Right ventricle myocardium inferior (tissue), 1 donor: ENCODE measurements at regions of chr17 and their contacts with region 1.

Region 1: GRCh38 chr17:55845385-55845784 is 94.5 kb downstream of the PCTP start:
- DNase-seq: peak; percentile 74
- ATAC-seq: peak; percentile 89

Region 2: DNA sequence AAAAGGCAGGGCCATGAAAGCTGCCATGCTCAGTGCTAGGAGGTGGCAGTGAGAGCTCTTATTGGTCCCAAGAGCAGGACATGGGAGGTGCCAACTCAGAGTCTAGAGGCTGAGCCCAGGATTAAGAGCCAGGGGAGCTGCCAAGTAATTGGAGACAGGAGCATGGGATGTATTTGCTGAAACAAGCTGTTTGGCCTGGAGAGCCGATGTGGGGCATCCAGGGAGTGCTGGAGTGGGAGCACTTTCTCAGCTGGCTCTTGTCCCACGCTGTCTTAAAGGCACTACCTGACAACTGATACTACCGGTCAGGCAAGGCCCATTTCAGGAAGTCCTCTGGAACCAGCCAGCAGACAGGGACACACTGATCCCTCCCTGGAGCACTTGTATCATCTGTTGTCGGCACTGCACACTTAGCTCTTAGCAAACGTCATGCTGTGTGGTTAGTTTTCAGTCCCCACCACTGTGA is 327.2 kb after region 1 on chr17:
- intact Hi-C with region 1: no loop called
- DNase-seq: no peak
- ATAC-seq: peak; percentile 85

Region 3: GRCh38 chr17:56320443-56320842 is 475.1 kb after region 1 on chr17:
- intact Hi-C with region 1: loop called (anchors 5 kb)
- DNase-seq: no peak
- ATAC-seq: no peak

Region 4: DNA sequence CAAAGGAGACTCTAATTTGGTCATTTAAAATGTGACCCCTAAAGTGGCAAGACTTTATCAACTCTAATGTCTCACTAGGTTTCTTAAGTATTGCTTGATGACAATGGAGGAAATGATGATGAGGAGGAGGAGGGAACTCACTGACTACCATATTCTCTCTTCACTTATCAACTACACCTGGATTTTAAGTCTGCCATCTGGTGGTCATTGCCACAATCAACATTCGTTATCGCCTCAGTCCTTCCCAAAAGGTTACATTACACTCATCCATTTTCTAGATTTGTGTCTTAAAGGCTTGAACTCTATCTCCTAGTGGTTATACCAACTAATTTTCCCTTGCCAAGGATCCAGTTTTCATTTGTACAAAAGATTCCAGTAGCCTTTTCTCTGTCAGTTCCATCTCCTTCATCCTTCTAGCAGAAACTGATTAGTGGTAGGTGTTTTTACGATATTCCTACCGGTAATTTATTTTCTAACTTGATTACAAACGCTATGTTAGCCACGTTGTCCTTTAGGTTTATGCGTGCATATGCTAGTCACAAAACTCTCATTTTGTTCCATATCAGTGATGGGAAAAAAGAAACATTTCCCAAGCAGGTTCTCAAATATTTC is 633.6 kb after region 1 on chr17:
- intact Hi-C with region 1: loop called (anchors 10 kb)
- DNase-seq: no peak
- ATAC-seq: no peak